ENCODE measurements at regions of chr16 and their contacts with region 1.

Region 1: DNA sequence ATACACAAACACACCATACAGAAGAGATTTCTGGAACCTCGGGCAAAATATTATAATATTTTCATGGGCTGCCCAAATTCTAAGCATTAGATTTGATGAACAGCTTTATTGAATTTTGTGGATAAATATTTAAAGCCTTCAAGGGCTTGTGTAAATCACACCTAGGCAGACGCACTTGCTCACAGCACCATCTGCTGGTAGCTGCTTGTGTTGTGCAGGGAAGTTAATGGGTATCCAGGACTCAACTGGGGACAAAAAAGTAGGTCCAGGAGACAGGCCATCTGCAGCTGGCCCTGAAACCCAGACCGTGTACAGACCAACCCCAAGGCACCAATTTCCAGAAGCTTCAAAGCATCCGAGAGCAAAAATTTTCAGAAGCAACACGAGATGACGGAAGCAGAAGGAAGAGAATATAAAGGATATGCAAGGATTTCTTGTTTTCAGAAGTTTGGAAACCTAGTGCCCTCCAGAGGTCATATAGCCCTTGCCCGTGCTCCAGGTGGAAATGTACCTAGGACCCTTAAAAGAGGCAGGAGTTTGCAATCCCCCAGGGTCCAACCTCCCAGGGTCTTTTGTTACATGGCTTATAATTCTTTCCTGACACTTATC is 140.0 kb downstream of the CHD9NB start:
- DNase-seq: peak; percentile 55
- H3K4me3 ChIP-seq: peak overlapping the region in 1 of 2 experiments; percentile 50; a peak in 1 of 4 replicates
- H3K27ac ChIP-seq: no peak overlapping the region
- H3K4me1 ChIP-seq: no peaks in the 10 kb centered on the region
- H3K27me3 ChIP-seq: no peaks in the 10 kb centered on the region
- CTCF ChIP-seq: peak; percentile 74
- EP300 ChIP-seq: no peak
- RAD21 ChIP-seq: peak; percentile 78

Region 2: GRCh38 chr16:52068447-52069074 is 844.1 kb before region 1 on chr16:
- CTCF ChIA-PET with region 1: interaction called, 13 read pairs
- POLR2A ChIA-PET with region 1: no interaction called
- DNase-seq: peak; percentile 1
- H3K4me3 ChIP-seq: no peak overlapping the region
- H3K27ac ChIP-seq: no peak overlapping the region
- H3K4me1 ChIP-seq: no peaks in the 10 kb centered on the region
- H3K27me3 ChIP-seq: no peaks in the 10 kb centered on the region
- CTCF ChIP-seq: no peak
- EP300 ChIP-seq: no peak
- RAD21 ChIP-seq: peak; percentile 48

Region 3: GRCh38 chr16:52773026-52773425 is 139.6 kb before region 1 on chr16:
- CTCF ChIA-PET with region 1: no interaction called
- POLR2A ChIA-PET with region 1: no interaction called
- DNase-seq: no peak
- H3K4me3 ChIP-seq: no peak overlapping the region
- H3K27ac ChIP-seq: no peak overlapping the region
- H3K4me1 ChIP-seq: no peaks in the 10 kb centered on the region
- H3K27me3 ChIP-seq: no peaks in the 10 kb centered on the region
- CTCF ChIP-seq: no peak
- EP300 ChIP-seq: no peak
- RAD21 ChIP-seq: no peak

Region 4: DNA sequence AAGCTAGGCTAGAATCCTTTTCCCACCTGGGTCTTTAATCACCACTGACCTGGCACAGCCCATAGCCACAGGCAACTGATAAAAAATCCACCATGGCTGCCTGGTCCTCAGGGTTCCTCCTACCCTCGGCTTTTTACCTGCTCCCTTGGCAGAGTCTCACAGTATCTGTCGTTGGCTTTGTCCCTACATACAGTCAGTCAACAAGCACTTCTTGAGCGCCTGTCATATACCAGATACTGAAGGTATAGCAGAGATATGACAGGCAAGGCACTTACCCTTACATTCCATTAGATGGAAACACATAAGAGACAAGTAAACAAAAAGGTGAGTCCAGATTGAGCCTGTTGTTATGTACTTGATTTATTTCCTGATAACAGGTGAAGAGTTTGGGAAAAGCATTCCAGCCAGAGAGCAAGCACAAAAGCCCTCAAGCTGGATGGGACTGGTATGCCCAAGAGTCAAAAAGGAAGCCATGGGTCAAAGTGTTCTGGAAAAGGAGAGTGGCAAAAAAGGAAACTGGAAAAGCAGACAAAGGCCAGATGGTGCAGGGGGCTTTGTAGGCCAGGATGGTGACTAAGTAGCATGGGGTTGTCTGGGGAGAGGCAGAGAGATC is 107.0 kb before region 1 on chr16:
- CTCF ChIA-PET with region 1: no interaction called
- POLR2A ChIA-PET with region 1: no interaction called
- DNase-seq: no peak
- H3K4me3 ChIP-seq: no peak overlapping the region
- H3K27ac ChIP-seq: no peak overlapping the region
- H3K4me1 ChIP-seq: no peaks in the 10 kb centered on the region
- H3K27me3 ChIP-seq: no peaks in the 10 kb centered on the region
- CTCF ChIP-seq: no peak
- EP300 ChIP-seq: no peak
- RAD21 ChIP-seq: no peak

Region 5: DNA sequence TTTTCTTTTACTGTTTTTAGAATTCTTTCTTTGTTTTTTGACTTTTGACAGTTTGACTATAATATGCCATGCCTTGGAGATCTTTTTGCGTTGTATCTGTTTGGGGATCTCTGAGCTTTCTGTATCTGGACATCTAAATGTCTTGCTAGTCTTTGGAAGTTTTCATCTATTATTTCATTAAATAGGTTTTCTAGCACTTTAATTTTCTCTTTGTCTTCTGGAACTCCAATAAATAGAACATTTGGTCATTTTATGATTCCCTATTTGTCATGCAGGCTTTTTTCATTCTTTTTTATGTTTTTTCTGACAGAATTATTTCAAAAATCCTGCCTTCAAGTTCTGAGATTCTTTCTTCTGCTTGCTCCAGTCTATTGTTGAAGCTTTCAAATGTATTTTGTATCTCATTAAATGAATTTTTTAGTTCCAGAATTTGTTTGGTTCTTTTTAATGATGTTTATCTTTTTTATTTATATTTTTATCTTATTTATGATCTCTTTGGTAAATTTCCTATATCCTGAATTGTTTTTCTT is 61.4 kb before region 1 on chr16:
- CTCF ChIA-PET with region 1: no interaction called
- POLR2A ChIA-PET with region 1: no interaction called
- DNase-seq: no peak
- H3K4me3 ChIP-seq: no peak overlapping the region
- H3K27ac ChIP-seq: no peak overlapping the region
- H3K4me1 ChIP-seq: no peaks in the 10 kb centered on the region
- H3K27me3 ChIP-seq: no peaks in the 10 kb centered on the region
- CTCF ChIP-seq: no peak
- EP300 ChIP-seq: no peak
- RAD21 ChIP-seq: no peak

Region 6: GRCh38 chr16:52925143-52925542 is 12.5 kb after region 1 on chr16:
- CTCF ChIA-PET with region 1: interaction called, 19 read pairs
- POLR2A ChIA-PET with region 1: no interaction called
- DNase-seq: no peak
- H3K4me3 ChIP-seq: no peak overlapping the region
- H3K27ac ChIP-seq: no peak overlapping the region
- H3K4me1 ChIP-seq: peaks cover 0 to 2% of the 10 kb centered on the region in 2 experiments; a peak in 2 of 4 replicates
- H3K27me3 ChIP-seq: no peaks in the 10 kb centered on the region
- CTCF ChIP-seq: no peak
- EP300 ChIP-seq: no peak
- RAD21 ChIP-seq: no peak